H1 (cell line): ENCODE measurements at regions of chrX and their contacts with region 1.

Region 1: GRCh38 chrX:134520860-134521390 is 61.0 kb downstream of the HPRT1 start:
- DNase-seq: no peak
- H3K4me3 ChIP-seq: no peak overlapping the region
- H3K27ac ChIP-seq: no peak overlapping the region
- H3K4me1 ChIP-seq: no peaks in the 10 kb centered on the region
- H3K27me3 ChIP-seq: no peaks in the 10 kb centered on the region
- CTCF ChIP-seq: peak in 2 of 3 experiments; percentile 68 to 74; a peak in 3 of 4 replicates
- EP300 ChIP-seq: no peak
- POLR2A ChIP-seq: no peak
- RAD21 ChIP-seq: peak; percentile 76 to 86

Region 2: DNA sequence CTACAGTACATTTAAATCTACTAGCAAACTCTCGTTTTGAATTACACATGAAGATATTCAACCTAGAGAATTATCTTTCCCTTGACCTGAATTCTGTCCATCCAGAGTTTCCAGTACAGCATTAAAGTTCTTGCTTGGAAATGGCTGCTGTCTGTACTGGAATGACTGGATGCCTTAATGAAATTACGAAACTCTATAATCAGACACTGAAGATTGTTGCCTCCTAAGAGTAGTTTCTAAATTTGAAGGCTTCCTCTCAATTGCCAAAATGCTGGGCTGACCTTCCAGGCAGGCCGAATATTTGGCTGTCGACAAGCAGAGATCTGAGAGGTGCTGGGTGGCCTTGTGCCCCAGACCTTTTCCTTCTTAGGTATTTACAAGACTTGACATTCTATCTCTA is 890.6 kb before region 1 on chrX:
- CTCF ChIA-PET with region 1: no interaction called
- POLR2A ChIA-PET with region 1: no interaction called
- DNase-seq: no peak
- H3K4me3 ChIP-seq: no peak overlapping the region
- H3K27ac ChIP-seq: no peak overlapping the region
- H3K4me1 ChIP-seq: no peaks in the 10 kb centered on the region
- H3K27me3 ChIP-seq: no peaks in the 10 kb centered on the region
- CTCF ChIP-seq: no peak
- EP300 ChIP-seq: no peak
- POLR2A ChIP-seq: no peak
- RAD21 ChIP-seq: no peak

Region 3: DNA sequence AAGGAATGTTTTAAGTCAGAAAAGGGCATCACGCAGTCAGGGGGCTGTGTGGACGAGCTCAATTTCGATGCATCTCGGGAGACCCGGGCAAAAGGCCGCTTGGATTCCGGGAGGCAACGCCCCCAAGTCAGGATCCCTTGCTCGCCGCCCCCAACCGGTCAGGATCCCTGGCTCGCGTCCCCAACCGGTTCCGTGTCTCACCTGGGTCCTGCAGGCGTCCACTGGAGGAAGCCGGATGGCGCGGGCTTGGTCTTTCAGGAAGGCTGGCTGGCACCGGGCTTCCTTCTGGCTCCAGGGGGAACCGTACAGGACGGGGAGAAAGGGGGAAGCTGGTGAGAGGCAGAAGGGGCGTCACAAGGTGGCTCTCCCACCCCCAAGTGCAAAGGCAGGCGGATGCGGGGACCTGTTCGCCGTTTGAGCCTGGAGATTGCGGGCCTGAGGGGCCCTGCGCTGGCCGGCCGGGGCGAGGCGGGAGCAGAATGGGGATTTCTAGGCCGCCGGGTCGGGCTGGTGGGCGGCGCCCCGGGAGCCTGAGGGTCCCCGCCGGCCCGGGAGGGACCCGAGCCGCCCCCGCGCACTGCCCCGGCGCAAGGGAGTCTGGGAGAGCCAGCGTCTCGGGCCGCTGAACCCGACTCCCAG is 23.7 kb after region 1 on chrX:
- CTCF ChIA-PET with region 1: interaction called, 10 read pairs
- POLR2A ChIA-PET with region 1: interaction called, 3 read pairs
- DNase-seq: peak in 1 of 2 experiments; percentile 54
- H3K4me3 ChIP-seq: peak overlapping the region; percentile 26 to 70 (median 47)
- H3K27ac ChIP-seq: no peak overlapping the region
- H3K4me1 ChIP-seq: peaks cover 2 to 19% (median 9%) of the 10 kb centered on the region in 4 experiments; a peak in 5 of 7 replicates
- H3K27me3 ChIP-seq: peaks cover 11 to 32% (median 24%) of the 10 kb centered on the region in 4 experiments; a peak in 6 of 7 replicates
- CTCF ChIP-seq: no peak
- EP300 ChIP-seq: no peak
- POLR2A ChIP-seq: no peak
- RAD21 ChIP-seq: no peak

Region 4: GRCh38 chrX:134558133-134558532 is 37.2 kb after region 1 on chrX:
- CTCF ChIA-PET with region 1: no interaction called
- POLR2A ChIA-PET with region 1: no interaction called
- DNase-seq: no peak
- H3K4me3 ChIP-seq: no peak overlapping the region
- H3K27ac ChIP-seq: no peak overlapping the region
- H3K4me1 ChIP-seq: peaks cover 0 to 4% (median 0%) of the 10 kb centered on the region in 4 experiments; a peak in 2 of 7 replicates
- H3K27me3 ChIP-seq: no peaks in the 10 kb centered on the region; a peak in 1 of 7 replicates
- CTCF ChIP-seq: no peak
- EP300 ChIP-seq: no peak
- POLR2A ChIP-seq: no peak
- RAD21 ChIP-seq: no peak

Region 5: DNA sequence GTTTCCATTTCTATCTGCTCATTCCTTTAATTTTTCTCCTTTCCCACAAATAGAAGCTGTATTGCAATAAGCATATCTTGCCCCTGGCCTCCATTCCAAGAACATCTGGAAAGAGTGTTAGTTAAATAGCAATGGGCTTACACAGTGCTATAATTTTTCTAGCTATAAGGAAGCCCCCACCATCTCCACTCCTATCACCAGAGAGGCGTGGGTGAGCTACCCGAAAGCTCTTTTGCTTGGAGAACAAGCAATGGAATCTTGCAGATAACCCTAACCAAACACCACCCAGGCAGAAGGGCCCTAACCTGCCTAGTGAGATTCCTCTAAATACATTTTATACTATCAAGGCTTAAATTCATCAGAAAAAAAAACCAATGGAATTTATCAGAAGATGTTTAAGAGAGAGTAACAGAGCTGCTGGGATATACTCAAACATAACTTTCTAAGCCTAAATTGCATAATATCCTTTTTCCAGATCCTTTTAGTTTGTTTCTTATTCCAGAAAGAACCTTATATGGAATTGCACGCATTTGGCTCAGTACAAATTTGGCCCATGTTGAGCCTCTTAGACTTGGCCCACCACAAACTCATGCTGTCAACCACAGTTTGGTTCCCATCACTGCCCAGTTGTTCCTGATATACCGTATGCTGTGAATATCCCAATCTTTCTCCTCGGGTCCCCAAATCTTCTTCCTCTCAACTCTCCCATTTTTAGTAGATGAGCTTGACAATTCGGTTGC is 229.0 kb after region 1 on chrX:
- CTCF ChIA-PET with region 1: interaction called, 11 read pairs
- POLR2A ChIA-PET with region 1: no interaction called
- DNase-seq: no peak
- H3K4me3 ChIP-seq: no peak overlapping the region
- H3K27ac ChIP-seq: no peak overlapping the region
- H3K4me1 ChIP-seq: no peaks in the 10 kb centered on the region
- H3K27me3 ChIP-seq: no peaks in the 10 kb centered on the region
- CTCF ChIP-seq: no peak
- EP300 ChIP-seq: no peak
- POLR2A ChIP-seq: no peak
- RAD21 ChIP-seq: no peak

Region 6: GRCh38 chrX:134764212-134764785 is 243.4 kb after region 1 on chrX:
- CTCF ChIA-PET with region 1: interaction called, 16 read pairs
- POLR2A ChIA-PET with region 1: no interaction called
- DNase-seq: no peak
- H3K4me3 ChIP-seq: no peak overlapping the region
- H3K27ac ChIP-seq: no peak overlapping the region
- H3K4me1 ChIP-seq: no peaks in the 10 kb centered on the region
- H3K27me3 ChIP-seq: no peaks in the 10 kb centered on the region
- CTCF ChIP-seq: peak in 2 of 3 experiments; percentile 49 to 78; a peak in 3 of 4 replicates
- EP300 ChIP-seq: no peak
- POLR2A ChIP-seq: no peak
- RAD21 ChIP-seq: peak; percentile 36 to 51

Region 7: DNA sequence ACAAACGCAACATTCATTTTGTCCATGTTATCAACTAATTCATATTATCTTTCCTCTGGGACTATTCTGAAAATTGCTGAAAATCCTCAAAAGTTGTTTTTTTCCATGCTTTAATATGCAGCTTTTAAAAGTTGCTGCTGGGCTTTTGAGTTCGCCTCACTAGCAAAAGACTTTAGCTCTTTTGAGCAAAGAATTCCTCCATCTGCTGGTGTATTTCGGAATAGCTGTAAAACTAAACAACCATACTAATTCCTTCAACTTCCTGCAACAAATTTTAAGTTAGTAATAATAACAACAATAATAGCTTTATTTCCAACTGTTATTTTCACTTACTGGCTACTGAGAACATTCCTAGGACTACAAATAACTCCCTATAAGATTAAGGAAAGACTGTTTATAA is 261.9 kb after region 1 on chrX:
- CTCF ChIA-PET with region 1: interaction called, 13 read pairs
- POLR2A ChIA-PET with region 1: no interaction called
- DNase-seq: no peak
- H3K4me3 ChIP-seq: no peak overlapping the region
- H3K27ac ChIP-seq: no peak overlapping the region
- H3K4me1 ChIP-seq: no peaks in the 10 kb centered on the region
- H3K27me3 ChIP-seq: no peaks in the 10 kb centered on the region
- CTCF ChIP-seq: peak in 2 of 3 experiments; percentile 25 to 28; a peak in 2 of 4 replicates
- EP300 ChIP-seq: no peak
- POLR2A ChIP-seq: no peak
- RAD21 ChIP-seq: peak; percentile 24 to 49; a peak in 3 of 4 replicates